PC-3 (cell line): ENCODE measurements at regions of chr1 and their contacts with region 1.

Region 1: GRCh38 chr1:23825076-23825761 is at the start of gene HMGCL:
- DNase-seq: peak; percentile 82
- ATAC-seq: peak; percentile 97
- H3K4me3 ChIP-seq: peak within 1 kb of the TSS; percentile 85
- H3K27ac ChIP-seq: peak within 1 kb of the TSS; percentile 42
- H3K4me1 ChIP-seq: peaks cover 14% of the 10 kb centered on the region
- H3K27me3 ChIP-seq: no peaks in the 10 kb centered on the region
- CTCF ChIP-seq: no peak
- total RNA-seq, gene HMGCL: 28.2 and 30.8 TPM in 2 replicates

Region 2: GRCh38 chr1:23777979-23778814 is 47.0 kb before region 1 on chr1 and contains the start of gene PITHD1:
- CTCF ChIA-PET with region 1: no interaction called
- POLR2A ChIA-PET with region 1: interaction called, 12 read pairs
- intact Hi-C with region 1: no loop called
- DNase-seq: peak; percentile 86
- ATAC-seq: peak; percentile 74
- H3K4me3 ChIP-seq: peak within 1 kb of the TSS; percentile 85
- H3K27ac ChIP-seq: peak within 1 kb of the TSS; percentile 84
- H3K4me1 ChIP-seq: peaks cover 27% of the 10 kb centered on the region
- H3K27me3 ChIP-seq: no peaks in the 10 kb centered on the region
- CTCF ChIP-seq: no peak
- total RNA-seq, gene PITHD1: 107 and 115 TPM in 2 replicates

Region 3: GRCh38 chr1:23790696-23791515 is 34.3 kb before region 1 on chr1 and contains the start of gene LYPLA2:
- CTCF ChIA-PET with region 1: interaction called, 3 read pairs
- POLR2A ChIA-PET with region 1: interaction called, 21 read pairs
- intact Hi-C with region 1: no loop called
- DNase-seq: peak; percentile 87
- ATAC-seq: peak; percentile 73
- H3K4me3 ChIP-seq: peak within 1 kb of the TSS; percentile 100
- H3K27ac ChIP-seq: peak within 1 kb of the TSS; percentile 82
- H3K4me1 ChIP-seq: peaks cover 24% of the 10 kb centered on the region
- H3K27me3 ChIP-seq: no peaks in the 10 kb centered on the region
- CTCF ChIP-seq: no peak
- total RNA-seq, gene LYPLA2: 120 and 142 TPM in 2 replicates

Region 4: GRCh38 chr1:23800400-23801337 is 24.6 kb before region 1 on chr1 and contains the start of gene GALE:
- CTCF ChIA-PET with region 1: no interaction called
- POLR2A ChIA-PET with region 1: interaction called, 18 read pairs
- intact Hi-C with region 1: no loop called
- DNase-seq: peak; percentile 93
- ATAC-seq: peak; percentile 57
- H3K4me3 ChIP-seq: peak within 1 kb of the TSS; percentile 93
- H3K27ac ChIP-seq: peak within 1 kb of the TSS; percentile 96
- H3K4me1 ChIP-seq: peaks cover 21% of the 10 kb centered on the region
- H3K27me3 ChIP-seq: no peaks in the 10 kb centered on the region
- CTCF ChIP-seq: no peak
- total RNA-seq, gene GALE: 86.0 and 86.4 TPM in 2 replicates

Region 5: DNA sequence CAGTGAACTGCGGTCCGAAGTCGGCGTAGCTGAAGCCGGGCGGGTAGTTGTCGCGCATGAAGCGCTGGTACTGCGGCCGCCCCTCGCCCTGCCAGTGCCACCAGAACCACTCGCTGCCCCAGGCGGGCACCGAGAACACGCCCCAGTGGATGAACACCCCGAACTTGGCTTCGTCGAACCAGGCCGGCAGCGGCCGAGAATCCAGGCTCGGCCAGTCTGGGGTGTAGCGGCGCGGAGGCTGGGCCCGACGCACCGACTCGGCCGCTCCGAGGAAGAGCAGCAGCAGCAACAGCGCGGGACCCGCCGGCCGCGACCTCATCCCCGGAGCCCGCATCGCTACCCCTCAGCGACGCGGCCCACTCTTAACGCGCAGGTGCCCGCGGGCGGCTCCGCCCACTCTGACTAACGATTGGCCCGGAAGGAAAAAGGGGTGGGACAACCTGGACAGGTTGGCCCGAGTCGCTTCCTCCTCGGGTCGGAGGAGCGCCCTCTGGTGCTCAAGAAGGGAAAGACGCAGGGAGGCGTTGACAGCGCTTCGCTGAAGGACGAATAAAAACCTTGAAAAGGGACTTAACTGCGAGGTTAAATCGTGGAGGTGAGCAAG is 42.8 kb after region 1 on chr1 and contains the start of gene FUCA1:
- CTCF ChIA-PET with region 1: no interaction called
- POLR2A ChIA-PET with region 1: interaction called, 9 read pairs
- intact Hi-C with region 1: loop called (anchors 5 kb)
- DNase-seq: peak; percentile 98
- ATAC-seq: peak; percentile 90
- H3K4me3 ChIP-seq: peak within 1 kb of the TSS; percentile 82
- H3K27ac ChIP-seq: no peak within 1 kb of the TSS
- H3K4me1 ChIP-seq: peaks cover 35% of the 10 kb centered on the region
- H3K27me3 ChIP-seq: no peaks in the 10 kb centered on the region
- CTCF ChIP-seq: peak; percentile 84
- total RNA-seq, gene FUCA1: 20.3 and 23.4 TPM in 2 replicates

Region 6: GRCh38 chr1:23908493-23909341 is 83.5 kb after region 1 on chr1:
- CTCF ChIA-PET with region 1: no interaction called
- POLR2A ChIA-PET with region 1: interaction called, 15 read pairs
- intact Hi-C with region 1: no loop called
- DNase-seq: no peak
- ATAC-seq: no peak
- H3K4me3 ChIP-seq: no peak overlapping the region
- H3K27ac ChIP-seq: no peak overlapping the region
- H3K4me1 ChIP-seq: peaks cover 12% of the 10 kb centered on the region
- H3K27me3 ChIP-seq: no peaks in the 10 kb centered on the region
- CTCF ChIP-seq: no peak